GM13976 (cell line): ENCODE measurements at regions of chr1 and their contacts with region 1.

Region 1: GRCh38 chr1:17606826-17607440 is 67.4 kb downstream of the ARHGEF10L start:
- DNase-seq: peak; percentile 85
- CTCF ChIP-seq: peak; percentile 89

Region 2: DNA sequence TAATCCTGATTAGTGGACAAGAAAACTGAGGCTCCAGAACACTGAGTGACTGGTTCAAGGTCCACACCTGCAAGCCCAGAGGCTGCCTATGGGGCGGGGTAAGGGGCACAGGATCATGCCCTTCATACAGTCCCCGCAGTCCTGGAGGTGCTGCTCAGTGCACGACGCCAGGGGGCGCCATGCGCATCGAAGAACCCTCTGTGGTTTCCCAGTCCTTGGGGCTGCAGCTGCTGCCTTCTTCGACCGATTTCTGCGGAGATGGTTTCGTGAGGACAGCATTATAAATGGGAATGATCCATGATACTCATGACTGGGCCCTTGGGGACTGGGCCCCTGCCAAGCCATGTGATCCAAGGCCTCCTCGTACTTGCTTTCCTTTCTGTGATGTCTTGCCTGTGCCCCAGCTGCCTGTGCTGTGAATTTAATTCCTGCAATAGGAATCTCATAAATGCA is 104.6 kb before region 1 on chr1:
- in situ Hi-C with region 1: loop called (anchors 10 kb)
- DNase-seq: peak; percentile 82
- CTCF ChIP-seq: peak; percentile 86